ENCODE measurements at regions of chr4 and their contacts with region 1.

Region 1: GRCh38 chr4:87150498-87151261 is 69.7 kb downstream of the KLHL8 start:
- DNase-seq: peak; percentile 26
- H3K4me3 Mint-ChIP-seq: no peak overlapping the region
- H3K27ac Mint-ChIP-seq: no peak overlapping the region
- H3K4me1 Mint-ChIP-seq: no peaks in the 10 kb centered on the region
- H3K27me3 Mint-ChIP-seq: no peaks in the 10 kb centered on the region

Region 2: DNA sequence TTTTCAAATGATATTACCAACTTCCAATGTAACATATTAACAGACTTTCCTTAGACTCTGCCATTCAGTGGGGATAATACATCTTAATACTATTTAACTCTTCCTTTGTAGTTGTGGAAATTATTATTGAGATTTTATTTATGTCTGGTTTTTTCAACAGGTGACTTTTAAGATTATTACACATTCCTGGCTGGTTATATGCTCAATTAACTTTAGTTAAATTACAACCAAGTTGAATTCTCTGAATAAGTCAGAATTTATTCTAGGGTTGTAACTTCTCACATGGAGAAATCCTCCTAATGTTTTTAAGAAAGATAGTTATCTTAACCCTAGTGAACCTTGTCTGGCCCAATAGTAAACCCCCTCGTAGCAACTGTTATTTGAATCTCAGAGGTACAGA is 408.8 kb before region 1 on chr4:
- CTCF ChIA-PET with region 1: no interaction called
- POLR2A ChIA-PET with region 1: no interaction called
- DNase-seq: no peak
- H3K4me3 Mint-ChIP-seq: no peak overlapping the region
- H3K27ac Mint-ChIP-seq: no peak overlapping the region
- H3K4me1 Mint-ChIP-seq: no peaks in the 10 kb centered on the region
- H3K27me3 Mint-ChIP-seq: peaks cover 3% of the 10 kb centered on the region

Region 3: GRCh38 chr4:87166296-87166854 is 15.7 kb after region 1 on chr4:
- CTCF ChIA-PET with region 1: interaction called, 22 read pairs
- POLR2A ChIA-PET with region 1: no interaction called
- DNase-seq: no peak
- H3K4me3 Mint-ChIP-seq: no peak overlapping the region
- H3K27ac Mint-ChIP-seq: no peak overlapping the region
- H3K4me1 Mint-ChIP-seq: peaks cover 8% of the 10 kb centered on the region
- H3K27me3 Mint-ChIP-seq: no peaks in the 10 kb centered on the region

Region 4: DNA sequence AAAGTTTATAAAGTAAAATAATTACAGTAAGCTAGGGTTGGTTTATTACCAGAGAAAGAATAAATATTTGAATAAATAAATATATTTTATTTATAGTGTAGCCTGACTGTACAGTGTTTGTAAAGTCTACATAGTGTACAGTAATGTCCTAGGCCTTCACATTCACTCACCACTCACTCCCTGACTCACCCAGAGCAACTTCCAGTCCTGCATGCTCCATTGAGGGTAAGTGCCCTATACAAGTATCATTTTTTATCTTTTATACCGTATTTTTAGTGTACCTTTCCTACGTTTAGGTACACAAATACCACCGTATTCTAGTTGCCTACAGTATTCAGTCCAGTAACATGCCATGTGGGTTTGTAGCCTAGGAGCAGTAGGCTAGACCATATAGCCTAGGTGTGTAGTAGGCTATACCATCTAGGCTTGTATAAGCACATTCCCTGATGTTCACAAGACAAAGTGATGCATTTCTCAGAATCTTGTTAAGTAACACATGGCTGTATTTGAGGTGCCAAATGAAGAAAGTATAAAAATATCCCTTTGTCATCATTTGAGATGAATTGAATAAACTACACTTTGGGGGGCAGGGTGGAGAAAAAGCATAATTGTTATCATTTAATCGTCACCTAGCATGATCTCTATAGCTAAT is 84.5 kb after region 1 on chr4:
- CTCF ChIA-PET with region 1: interaction called, 56 read pairs
- POLR2A ChIA-PET with region 1: interaction called, 3 read pairs
- DNase-seq: no peak
- H3K4me3 Mint-ChIP-seq: no peak overlapping the region
- H3K27ac Mint-ChIP-seq: no peak overlapping the region
- H3K4me1 Mint-ChIP-seq: peaks cover 3% of the 10 kb centered on the region
- H3K27me3 Mint-ChIP-seq: peaks cover 4% of the 10 kb centered on the region

Region 5: GRCh38 chr4:87465739-87466366 is 315.2 kb after region 1 on chr4:
- CTCF ChIA-PET with region 1: interaction called, 10 read pairs
- POLR2A ChIA-PET with region 1: no interaction called
- DNase-seq: no peak
- H3K4me3 Mint-ChIP-seq: no peak overlapping the region
- H3K27ac Mint-ChIP-seq: no peak overlapping the region
- H3K4me1 Mint-ChIP-seq: peaks cover 6% of the 10 kb centered on the region
- H3K27me3 Mint-ChIP-seq: no peaks in the 10 kb centered on the region

Measured in activated CD4-positive, alpha-beta memory T cell treated with anti-CD3 and anti-CD28 coated beads, Interleukin-2, amount 10 ng/mL, durations not matched to agents 7 days and 5 days (primary cell).